ENCODE measurements at regions of chr4 and their contacts with region 1.

Region 1: GRCh38 chr4:80215449-80216052 is 18.2 kb downstream of the PRDM8 start:
- DNase-seq: no peak
- ATAC-seq: peak; percentile 49; the same call in 2 of the 3 replicates
- H3K4me3 ChIP-seq: no peak overlapping the region
- H3K27ac ChIP-seq: no peak overlapping the region
- H3K4me1 ChIP-seq: no peaks in the 10 kb centered on the region
- H3K27me3 ChIP-seq: peaks cover 0 to 7% of the 10 kb centered on the region in 2 experiments; a peak in 2 of 4 replicates
- CTCF ChIP-seq: peak; percentile 41 to 62 (median 58)
- EP300 ChIP-seq: no peak
- POLR2A ChIP-seq: no peak
- RAD21 ChIP-seq: peak; percentile 72

Region 2: DNA sequence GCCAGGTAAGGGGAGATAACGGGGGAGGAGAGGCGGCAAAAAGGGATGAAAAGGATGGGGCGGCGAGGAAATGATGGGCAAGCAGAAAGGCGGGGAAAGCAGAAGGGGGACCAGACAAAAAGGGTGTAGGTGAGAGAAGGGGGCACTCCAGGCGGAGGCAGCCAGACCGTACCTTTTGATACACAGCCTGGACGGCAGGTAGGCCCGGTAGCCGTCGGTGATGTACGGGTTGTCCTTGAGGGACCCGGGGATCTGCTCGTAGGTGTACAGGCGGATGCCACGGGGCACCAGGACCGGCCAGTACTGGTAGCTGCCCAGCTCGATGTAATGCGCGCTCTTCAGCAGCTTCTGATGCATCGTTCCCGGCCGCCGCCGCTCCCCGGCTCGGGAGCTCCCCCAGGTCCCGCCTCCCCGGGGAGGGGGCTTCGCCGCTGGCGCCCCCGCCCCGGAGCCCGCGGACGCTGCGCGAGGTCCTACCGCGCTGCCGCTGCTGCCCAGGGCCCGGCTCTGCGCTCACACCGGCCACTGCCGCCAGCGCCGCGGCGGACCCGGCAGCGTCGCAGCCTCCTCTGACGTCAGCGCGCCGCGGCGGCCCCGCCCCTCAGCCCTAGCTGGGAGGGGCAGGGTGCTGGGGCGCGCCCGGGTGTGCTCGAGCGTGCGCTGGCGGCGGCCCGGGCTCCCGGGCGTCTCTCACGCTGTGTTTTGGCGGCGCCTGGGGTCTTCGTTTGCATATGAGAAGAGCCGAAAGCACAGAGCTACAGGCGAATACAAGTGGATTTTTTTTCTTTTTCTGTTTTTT is 1276.5 kb before region 1 on chr4 and contains the start of gene PAQR3:
- CTCF ChIA-PET with region 1: no interaction called
- POLR2A ChIA-PET with region 1: no interaction called
- RAD21 ChIA-PET with region 1: no interaction called
- SMC1A ChIA-PET with region 1: no interaction called
- in situ Hi-C with region 1: loop called (anchors 10 kb)
- intact Hi-C with region 1: no loop called
- DNase-seq: peak; percentile 21
- ATAC-seq: peak; percentile 97
- H3K4me3 ChIP-seq: peak within 1 kb of the TSS; percentile 78
- H3K27ac ChIP-seq: no peak within 1 kb of the TSS; the same call in 1 of the 2 replicates
- H3K4me1 ChIP-seq: no peaks in the 10 kb centered on the region; the same call in 1 of the 2 replicates
- H3K27me3 ChIP-seq: no peaks in the 10 kb centered on the region
- CTCF ChIP-seq: 0 out of 6 replicates have a peak, but pooled peaks of 1 of the 3 experiments have one; percentile 1
- EP300 ChIP-seq: no peak
- POLR2A ChIP-seq: peak; percentile 88
- RAD21 ChIP-seq: no peak
- polyA plus RNA-seq, gene PAQR3: 2.2 to 3.0 TPM

Region 3: DNA sequence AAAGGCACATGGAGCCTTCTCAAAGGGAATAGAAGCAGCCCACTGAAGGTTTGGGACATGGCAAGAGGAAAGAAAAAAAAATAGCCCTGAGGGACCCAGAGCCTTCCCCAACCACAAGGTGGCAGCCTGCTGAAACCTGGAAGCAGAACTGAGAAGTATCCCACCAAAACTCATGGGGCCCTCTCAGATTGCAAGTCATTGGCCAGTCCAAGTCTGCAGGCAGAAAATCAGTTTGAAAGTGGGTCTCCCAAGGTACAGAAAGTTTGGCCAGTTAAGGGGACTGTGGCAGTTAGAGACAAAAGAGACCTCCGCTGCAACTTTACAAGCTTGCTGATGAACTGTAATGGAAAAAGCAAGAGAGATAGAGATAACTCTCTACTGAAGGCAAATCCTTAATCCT is 298.3 kb before region 1 on chr4:
- CTCF ChIA-PET with region 1: interaction called, 13 read pairs
- POLR2A ChIA-PET with region 1: no interaction called
- RAD21 ChIA-PET with region 1: interaction called, 6 read pairs
- SMC1A ChIA-PET with region 1: interaction called, 7 read pairs
- in situ Hi-C with region 1: no loop called
- intact Hi-C with region 1: loop called (anchors 1 kb)
- DNase-seq: peak; percentile 8
- ATAC-seq: peak; percentile 92
- H3K4me3 ChIP-seq: no peak overlapping the region
- H3K27ac ChIP-seq: no peak overlapping the region
- H3K4me1 ChIP-seq: no peaks in the 10 kb centered on the region
- H3K27me3 ChIP-seq: no peaks in the 10 kb centered on the region
- CTCF ChIP-seq: peak; percentile 68 to 83 (median 71)
- EP300 ChIP-seq: no peak
- POLR2A ChIP-seq: no peak
- RAD21 ChIP-seq: peak; percentile 71

Region 4: DNA sequence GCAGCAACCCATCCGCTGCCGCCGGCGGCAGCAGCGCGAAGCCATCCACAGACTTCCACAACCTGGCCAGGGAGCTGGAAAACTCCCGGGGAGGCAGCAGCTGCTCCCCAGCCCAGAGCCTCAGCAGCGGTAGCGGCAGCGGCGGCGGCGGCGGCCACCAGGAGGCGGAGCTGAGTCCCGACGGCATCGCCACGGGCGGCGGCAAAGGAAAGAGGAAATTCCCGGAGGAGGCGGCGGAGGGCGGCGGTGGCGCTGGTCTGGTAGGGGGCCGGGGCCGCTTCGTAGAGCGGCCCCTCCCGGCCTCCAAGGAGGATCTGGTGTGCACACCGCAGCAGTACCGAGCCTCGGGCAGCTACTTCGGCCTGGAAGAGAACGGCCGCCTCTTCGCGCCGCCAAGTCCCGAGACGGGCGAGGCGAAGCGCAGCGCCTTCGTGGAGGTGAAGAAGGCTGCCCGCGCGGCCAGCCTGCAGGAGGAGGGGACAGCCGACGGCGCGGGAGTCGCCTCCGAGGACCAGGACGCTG is 13.3 kb before region 1 on chr4:
- CTCF ChIA-PET with region 1: interaction called, 15 read pairs
- POLR2A ChIA-PET with region 1: no interaction called
- RAD21 ChIA-PET with region 1: interaction called, 8 read pairs
- SMC1A ChIA-PET with region 1: interaction called, 5 read pairs
- in situ Hi-C with region 1: no loop called
- intact Hi-C with region 1: no loop called
- DNase-seq: no peak
- ATAC-seq: peak; percentile 85
- H3K4me3 ChIP-seq: peak overlapping the region; percentile 71
- H3K27ac ChIP-seq: no peak overlapping the region
- H3K4me1 ChIP-seq: 0 out of 2 replicates have a peak, but pooled peaks cover 3% of the 10 kb centered on the region
- H3K27me3 ChIP-seq: peaks cover 0 to 13% of the 10 kb centered on the region in 2 experiments; a peak in 3 of 4 replicates
- CTCF ChIP-seq: peak; percentile 65 to 81 (median 66)
- EP300 ChIP-seq: no peak
- POLR2A ChIP-seq: no peak
- RAD21 ChIP-seq: peak; percentile 25; the same call in 1 of the 2 replicates

Region 5: GRCh38 chr4:80560337-80560736 is 344.8 kb after region 1 on chr4:
- CTCF ChIA-PET with region 1: no interaction called
- POLR2A ChIA-PET with region 1: no interaction called
- RAD21 ChIA-PET with region 1: no interaction called
- SMC1A ChIA-PET with region 1: no interaction called
- in situ Hi-C with region 1: no loop called
- intact Hi-C with region 1: no loop called
- DNase-seq: no peak
- ATAC-seq: no peak
- H3K4me3 ChIP-seq: no peak overlapping the region
- H3K27ac ChIP-seq: no peak overlapping the region
- H3K4me1 ChIP-seq: no peaks in the 10 kb centered on the region
- H3K27me3 ChIP-seq: no peaks in the 10 kb centered on the region; a peak in 1 of 4 replicates
- CTCF ChIP-seq: no peak
- EP300 ChIP-seq: no peak
- POLR2A ChIP-seq: no peak
- RAD21 ChIP-seq: no peak

Measured in GM12878 (cell line).